Gastrocnemius medialis (tissue), 4 donors: ENCODE measurements at regions of chr18 and their contacts with region 1.

Region 1: GRCh38 chr18:13611601-13612195 is 114.7 kb downstream of the FAM210A start:
- DNase-seq: peak in 1 of 2 donors; percentile 25
- ATAC-seq: peak; percentile 42
- H3K4me3 ChIP-seq: peak overlapping the region; percentile 48 to 61 (median 58)
- H3K27ac ChIP-seq: peak overlapping the region; percentile 43 to 77 (median 68)
- H3K4me1 ChIP-seq: peaks cover 28 to 32% of the 10 kb centered on the region in 2 donors
- H3K27me3 ChIP-seq: no peaks in the 10 kb centered on the region
- CTCF ChIP-seq: no peak
- POLR2A ChIP-seq: no peak

Region 2: DNA sequence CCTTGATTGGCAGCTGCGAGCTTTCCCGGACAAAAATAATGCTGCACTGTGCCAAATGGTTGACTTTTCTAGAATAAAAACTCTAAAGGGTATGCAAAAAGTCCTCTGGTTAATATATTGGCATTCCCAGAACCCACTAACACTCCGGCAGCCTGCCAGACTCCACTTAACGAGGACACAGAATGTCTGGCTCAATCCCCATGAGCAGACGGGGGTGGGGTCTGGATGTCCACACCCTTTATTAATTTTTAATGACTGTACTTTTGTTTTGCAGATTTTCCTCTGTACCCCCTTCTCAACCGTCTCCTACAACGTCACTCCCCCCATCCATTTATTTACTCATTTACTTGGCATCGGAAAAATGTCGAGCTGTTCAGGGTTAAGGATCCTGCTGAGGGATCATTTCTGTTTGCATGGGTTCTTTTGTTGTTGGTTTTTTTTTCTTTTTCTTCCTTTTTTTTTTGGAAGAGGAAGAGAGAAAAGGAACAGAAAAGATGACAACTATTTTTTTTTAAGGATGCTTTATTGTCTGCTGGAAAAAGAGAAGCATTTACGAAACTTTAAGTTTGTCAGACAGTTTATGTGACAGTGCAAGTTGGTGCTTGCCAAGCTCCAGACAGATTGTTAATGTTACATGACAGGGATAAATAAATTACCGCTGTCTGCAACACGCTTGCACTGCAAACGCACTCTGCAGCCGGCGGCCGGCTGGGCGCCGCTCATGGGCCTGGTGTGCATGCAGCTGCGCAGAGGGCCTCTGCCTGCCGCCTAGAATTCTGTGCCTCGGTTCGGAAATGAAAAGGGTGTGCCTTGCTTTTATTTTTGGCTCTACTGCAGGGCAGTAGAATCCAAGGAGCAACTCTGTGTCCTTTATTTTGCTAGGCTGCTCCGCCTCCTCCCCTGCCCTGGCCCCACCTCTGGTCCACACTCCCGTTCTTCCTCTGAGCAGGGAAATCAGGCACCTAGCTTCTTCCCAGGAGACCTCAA is 389.5 kb before region 1 on chr18:
- in situ Hi-C with region 1: no loop called
- intact Hi-C with region 1: loop called (anchors 5 kb)
- DNase-seq: peak; percentile 30 to 58
- ATAC-seq: peak in 1 of 2 donors; percentile 42
- H3K4me3 ChIP-seq: peak overlapping the region; percentile 13 to 31 (median 25)
- H3K27ac ChIP-seq: peak overlapping the region; percentile 80 to 94 (median 82)
- H3K4me1 ChIP-seq: peaks cover 55 to 61% of the 10 kb centered on the region in 2 donors
- H3K27me3 ChIP-seq: no peaks in the 10 kb centered on the region
- CTCF ChIP-seq: no peak
- POLR2A ChIP-seq: peak in 1 of 2 donors; percentile 16

Region 3: DNA sequence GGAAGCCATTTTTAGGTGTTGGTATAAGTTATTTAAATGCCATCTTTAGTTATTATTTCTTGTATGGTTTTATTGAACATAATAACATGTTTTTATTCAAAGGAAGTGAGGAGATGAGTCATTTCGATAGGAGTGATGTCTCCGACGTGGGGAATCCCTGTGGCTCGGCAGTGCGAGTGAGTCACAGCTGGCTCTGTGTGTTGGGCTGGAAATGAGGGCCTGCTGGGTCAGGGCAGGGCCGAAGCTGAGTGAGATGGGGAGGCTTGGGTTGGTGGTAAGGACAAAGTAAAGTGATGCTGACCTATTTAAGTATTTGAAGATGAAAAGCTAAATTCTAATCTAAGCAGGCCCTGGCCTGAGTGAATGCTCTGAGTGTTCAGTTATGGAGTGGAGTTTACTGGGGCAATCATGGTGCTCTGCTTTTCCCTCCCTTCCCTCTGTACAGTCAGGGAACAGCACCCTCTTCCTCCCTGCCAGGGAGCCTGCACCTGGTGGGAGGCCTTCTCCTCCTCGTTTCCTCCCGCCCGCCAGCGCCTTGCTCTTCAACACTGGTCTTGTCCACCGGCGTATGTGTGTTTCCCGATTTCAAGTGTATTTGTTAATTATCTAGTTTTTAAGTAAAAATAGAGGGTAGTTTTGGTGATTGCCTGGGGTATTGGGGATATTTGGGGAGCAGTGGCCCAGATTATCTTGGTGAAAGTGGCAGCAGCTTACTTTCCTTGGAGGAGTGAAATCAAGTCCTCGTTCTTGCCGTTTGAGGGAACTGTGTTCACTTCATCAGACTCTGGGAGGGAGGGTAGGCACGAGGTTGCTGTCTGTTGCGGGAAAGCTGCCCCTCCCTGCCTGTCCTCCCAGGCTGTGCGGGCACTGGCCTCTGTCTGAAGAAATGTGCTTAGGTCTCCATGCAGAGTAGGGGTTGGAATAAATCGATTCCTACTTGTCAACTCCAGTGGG is 236.1 kb before region 1 on chr18:
- in situ Hi-C with region 1: no loop called
- intact Hi-C with region 1: no loop called
- DNase-seq: peak; percentile 28 to 38
- ATAC-seq: peak in 1 of 2 donors; percentile 41
- H3K4me3 ChIP-seq: no peak overlapping the region
- H3K27ac ChIP-seq: peak overlapping the region; percentile 14 to 35 (median 22)
- H3K4me1 ChIP-seq: peaks cover 44 to 46% of the 10 kb centered on the region in 2 donors
- H3K27me3 ChIP-seq: no peaks in the 10 kb centered on the region
- CTCF ChIP-seq: no peak
- POLR2A ChIP-seq: no peak

Region 4: GRCh38 chr18:13500227-13500865 is 111.4 kb before region 1 on chr18:
- in situ Hi-C with region 1: no loop called
- intact Hi-C with region 1: loop called (anchors 5 kb)
- DNase-seq: peak; percentile 49 to 65
- ATAC-seq: peak; percentile 84 to 93
- H3K4me3 ChIP-seq: peak overlapping the region; percentile 45 to 55 (median 52)
- H3K27ac ChIP-seq: peak overlapping the region; percentile 85 to 96 (median 88)
- H3K4me1 ChIP-seq: peaks cover 35 to 43% of the 10 kb centered on the region in 2 donors
- H3K27me3 ChIP-seq: no peaks in the 10 kb centered on the region
- CTCF ChIP-seq: peak in 1 of 5 experiments; percentile 18
- POLR2A ChIP-seq: peak; percentile 56 to 64

Region 5: GRCh38 chr18:13716916-13717315 is 105.2 kb after region 1 on chr18:
- in situ Hi-C with region 1: no loop called
- intact Hi-C with region 1: no loop called
- DNase-seq: no peak
- ATAC-seq: no peak
- H3K4me3 ChIP-seq: no peak overlapping the region
- H3K27ac ChIP-seq: no peak overlapping the region
- H3K4me1 ChIP-seq: peaks cover 7 to 9% of the 10 kb centered on the region in 2 donors
- H3K27me3 ChIP-seq: no peaks in the 10 kb centered on the region
- CTCF ChIP-seq: no peak
- POLR2A ChIP-seq: no peak

Region 6: GRCh38 chr18:13909141-13909940 is 297.6 kb after region 1 on chr18:
- in situ Hi-C with region 1: no loop called
- intact Hi-C with region 1: no loop called
- DNase-seq: no peak
- ATAC-seq: no peak
- H3K4me3 ChIP-seq: no peak overlapping the region
- H3K27ac ChIP-seq: no peak overlapping the region
- H3K4me1 ChIP-seq: no peaks in the 10 kb centered on the region
- H3K27me3 ChIP-seq: no peaks in the 10 kb centered on the region
- CTCF ChIP-seq: no peak
- POLR2A ChIP-seq: no peak